ENCODE measurements at regions of chr9 and their contacts with region 1.

Region 1: DNA sequence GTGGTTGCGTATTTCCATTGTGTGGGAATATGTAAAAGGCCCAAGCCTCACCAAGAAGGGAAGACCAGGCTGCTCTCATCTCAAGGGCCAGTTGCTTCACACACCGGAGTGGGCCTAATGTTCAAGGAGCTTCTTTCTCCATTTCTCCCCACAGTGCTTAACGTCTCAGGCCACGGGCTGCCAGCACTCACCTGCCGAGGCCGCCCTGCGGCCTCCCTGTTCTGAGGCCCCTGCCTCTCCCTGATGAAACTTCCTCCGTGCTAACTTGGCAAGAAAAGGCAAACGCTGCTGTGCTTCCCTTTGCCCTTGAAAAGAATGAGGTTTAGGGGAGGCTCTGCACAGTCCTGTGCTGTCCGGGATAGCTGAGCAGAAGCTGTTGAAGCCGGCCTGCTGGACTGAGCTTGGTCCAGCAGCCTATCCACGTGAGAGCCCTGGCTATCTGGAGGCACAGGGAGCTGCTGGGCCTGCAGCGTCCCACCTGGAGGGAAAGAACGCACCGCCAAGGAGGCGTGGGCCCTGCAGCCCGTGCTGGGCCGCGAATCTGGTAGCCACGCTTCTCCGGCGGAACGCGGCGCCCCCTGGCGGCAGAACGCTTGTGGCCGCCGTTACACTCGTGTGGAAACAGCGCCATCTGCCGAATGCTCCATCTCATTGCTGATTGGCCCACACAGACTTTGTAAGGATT is 73.5 kb upstream of the PRSS3 start:
- DNase-seq: peak; percentile 78 to 85
- ATAC-seq: peak; percentile 73 to 91 (median 84)
- H3K4me3 ChIP-seq: no peak overlapping the region
- H3K27ac ChIP-seq: no peak overlapping the region
- H3K4me1 ChIP-seq: peaks cover 0 to 12% (median 3%) of the 10 kb centered on the region in 9 donors
- H3K27me3 ChIP-seq: peaks cover 0 to 18% (median 0%) of the 10 kb centered on the region in 7 donors
- CTCF ChIP-seq: peak in 8 of 9 donors; percentile 100

Region 2: DNA sequence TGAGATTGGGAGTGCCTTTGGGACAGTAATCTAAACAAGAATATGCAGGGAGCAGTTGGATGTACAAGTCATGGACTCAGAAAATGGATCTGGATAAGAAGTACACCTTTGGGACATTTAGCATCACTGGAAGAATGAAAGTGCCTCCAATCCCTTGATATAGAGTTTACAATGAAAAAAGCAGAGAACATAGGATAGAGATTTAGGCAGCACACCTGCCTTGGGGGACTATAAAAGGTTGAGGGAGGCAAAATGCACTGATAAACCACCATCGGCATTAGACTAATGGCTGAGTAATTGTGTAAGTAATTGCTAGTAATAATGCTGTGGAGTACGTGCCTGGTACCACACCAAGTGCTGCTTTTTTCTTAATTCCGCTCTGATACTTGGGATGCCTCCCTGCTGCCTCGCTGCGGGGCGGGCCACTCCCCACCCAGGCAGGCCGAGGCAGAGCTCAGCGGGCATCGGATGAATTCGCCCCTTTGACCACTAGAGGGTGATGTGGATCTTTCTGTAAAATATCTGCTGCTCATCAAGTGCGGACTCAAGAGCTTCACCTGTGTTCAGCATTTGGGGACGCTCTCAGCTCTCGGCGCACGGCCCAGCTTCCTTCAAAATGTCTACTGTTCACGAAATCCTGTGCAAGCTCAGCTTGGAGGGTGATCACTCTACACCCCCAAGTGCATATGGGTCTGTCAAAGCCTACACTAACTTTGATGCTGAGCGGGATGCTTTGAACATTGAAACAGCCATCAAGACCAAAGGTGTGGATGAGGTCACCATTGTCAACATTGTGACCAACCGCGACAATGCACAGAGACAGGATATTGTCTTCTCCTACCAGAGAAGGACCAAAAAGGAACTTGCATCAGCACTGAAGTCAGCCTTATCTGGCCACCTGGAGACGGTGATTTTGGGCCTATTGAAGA is 97.9 kb before region 1 on chr9:
- intact Hi-C with region 1: loop called (anchors 1 to 5 kb)
- DNase-seq: peak; percentile 32 to 52
- ATAC-seq: peak; percentile 76 to 91 (median 84)
- H3K4me3 ChIP-seq: no peak overlapping the region
- H3K27ac ChIP-seq: no peak overlapping the region
- H3K4me1 ChIP-seq: peaks cover 0 to 9% (median 0%) of the 10 kb centered on the region in 9 donors
- H3K27me3 ChIP-seq: peaks cover 0 to 41% (median 13%) of the 10 kb centered on the region in 7 donors
- CTCF ChIP-seq: peak; percentile 65 to 92 (median 89)

Region 3: GRCh38 chr9:33633636-33634035 is 88.2 kb before region 1 on chr9:
- intact Hi-C with region 1: loop called in 1 of 10 experiments (anchors 5 kb)
- DNase-seq: no peak
- ATAC-seq: no peak
- H3K4me3 ChIP-seq: no peak overlapping the region
- H3K27ac ChIP-seq: no peak overlapping the region
- H3K4me1 ChIP-seq: peaks cover 0 to 3% (median 0%) of the 10 kb centered on the region in 9 donors
- H3K27me3 ChIP-seq: peaks cover 0 to 69% (median 50%) of the 10 kb centered on the region in 7 donors
- CTCF ChIP-seq: no peak

Measured in heart right ventricle (tissue), 16 donors.